ENCODE measurements at regions of chr2 and their contacts with region 1.

Region 1: GRCh38 chr2:207769597-207770486 is at the start of gene FZD5:
- DNase-seq: peak; percentile 91
- H3K4me3 ChIP-seq: peak within 1 kb of the TSS; percentile 67 to 76 (median 75)
- H3K27ac ChIP-seq: peak within 1 kb of the TSS; percentile 28
- H3K4me1 ChIP-seq: peaks cover 9% of the 10 kb centered on the region
- H3K27me3 ChIP-seq: no peaks in the 10 kb centered on the region
- CTCF ChIP-seq: peak; percentile 36 to 60
- total RNA-seq, gene FZD5: 4.4 to 8.7 TPM

Region 2: DNA sequence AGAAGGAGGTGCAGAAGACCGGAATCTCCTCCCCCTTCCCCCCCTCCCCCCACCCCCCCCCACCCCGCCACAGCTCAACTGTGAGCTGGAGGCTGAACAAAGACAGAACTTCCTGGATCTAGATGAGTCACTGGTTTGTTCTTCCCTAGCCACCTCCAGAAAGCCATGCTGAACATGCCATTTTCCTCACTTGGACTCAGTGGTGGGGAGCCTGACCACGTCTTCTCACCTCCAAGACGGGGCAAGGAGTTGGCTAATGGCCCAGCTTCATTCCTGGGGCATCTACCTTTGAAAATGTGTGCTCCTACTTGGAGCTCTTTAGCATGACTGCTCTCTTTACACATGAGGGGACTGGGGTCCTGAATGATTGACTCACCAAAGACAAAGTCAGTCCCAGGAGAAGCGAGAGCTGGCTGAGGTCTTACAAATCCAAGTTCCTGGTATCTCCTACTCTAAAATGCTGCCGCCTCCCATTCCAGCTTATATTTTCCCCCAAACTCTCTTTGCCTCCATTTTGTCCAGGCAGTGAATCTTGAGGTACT is 22.5 kb after region 1 on chr2:
- CTCF ChIA-PET with region 1: no interaction called
- dilution Hi-C with region 1: no loop called
- in situ Hi-C with region 1: no loop called
- intact Hi-C with region 1: loop called (anchors 1 kb)
- DNase-seq: peak; percentile 61
- H3K4me3 ChIP-seq: no peak overlapping the region
- H3K27ac ChIP-seq: peak overlapping the region; percentile 53
- H3K4me1 ChIP-seq: peaks cover 19% of the 10 kb centered on the region
- H3K27me3 ChIP-seq: no peaks in the 10 kb centered on the region
- CTCF ChIP-seq: no peak

Region 3: DNA sequence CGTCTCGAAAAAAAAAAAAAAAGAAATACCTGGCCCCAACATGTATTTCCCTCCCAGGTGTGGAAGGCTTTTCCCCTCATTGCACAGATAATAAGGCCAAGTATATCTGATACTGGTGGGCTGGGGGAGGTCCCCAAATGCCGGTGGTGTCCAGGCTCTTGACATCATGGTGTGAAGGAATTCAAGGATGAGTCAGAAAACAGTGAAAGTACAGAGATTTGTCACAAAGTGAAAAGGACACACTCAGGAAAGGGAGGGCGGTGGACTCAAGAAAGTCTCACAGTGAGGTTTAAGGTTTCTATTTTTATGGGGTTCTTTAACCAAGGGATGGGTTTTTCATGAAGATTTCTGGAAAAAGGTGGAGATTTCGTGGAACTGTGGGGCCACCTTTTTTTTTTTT is 37.7 kb after region 1 on chr2:
- CTCF ChIA-PET with region 1: no interaction called
- dilution Hi-C with region 1: no loop called
- in situ Hi-C with region 1: no loop called
- intact Hi-C with region 1: no loop called
- DNase-seq: no peak
- H3K4me3 ChIP-seq: no peak overlapping the region
- H3K27ac ChIP-seq: no peak overlapping the region
- H3K4me1 ChIP-seq: peaks cover 30% of the 10 kb centered on the region
- H3K27me3 ChIP-seq: no peaks in the 10 kb centered on the region
- CTCF ChIP-seq: no peak

Region 4: GRCh38 chr2:207974216-207974605 is 204.4 kb after region 1 on chr2:
- CTCF ChIA-PET with region 1: no interaction called
- dilution Hi-C with region 1: no loop called
- in situ Hi-C with region 1: loop called in 1 of 2 experiments (anchors 25 kb)
- intact Hi-C with region 1: loop called (anchors 1 kb)
- DNase-seq: peak; percentile 16
- H3K4me3 ChIP-seq: no peak overlapping the region
- H3K27ac ChIP-seq: no peak overlapping the region
- H3K4me1 ChIP-seq: no peaks in the 10 kb centered on the region
- H3K27me3 ChIP-seq: no peaks in the 10 kb centered on the region
- CTCF ChIP-seq: no peak

Region 5: DNA sequence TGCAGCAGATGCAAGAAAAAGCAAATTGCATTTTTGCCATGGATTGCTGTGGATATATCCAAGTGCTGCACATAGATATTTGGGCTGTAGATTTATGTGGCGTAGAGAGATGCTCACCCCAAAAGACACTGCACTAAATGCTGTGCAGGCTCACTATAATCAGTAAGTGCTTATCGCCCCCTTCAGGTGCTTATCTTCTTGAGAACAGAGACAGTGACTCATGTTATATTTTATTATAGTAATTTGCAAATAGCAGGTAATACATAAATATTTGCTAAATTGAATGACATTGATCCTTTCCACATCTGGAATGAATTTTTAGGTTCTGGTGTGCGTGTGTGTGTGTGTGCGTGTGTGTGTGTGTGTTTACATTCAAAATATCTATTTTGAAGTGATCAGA is 292.3 kb after region 1 on chr2:
- CTCF ChIA-PET with region 1: no interaction called
- dilution Hi-C with region 1: loop called (anchors 25 kb)
- in situ Hi-C with region 1: no loop called
- intact Hi-C with region 1: loop called (anchors 2 kb)
- DNase-seq: peak; percentile 33
- H3K4me3 ChIP-seq: no peak overlapping the region
- H3K27ac ChIP-seq: no peak overlapping the region
- H3K4me1 ChIP-seq: peaks cover 10% of the 10 kb centered on the region
- H3K27me3 ChIP-seq: no peaks in the 10 kb centered on the region
- CTCF ChIP-seq: peak; percentile 55 to 56

Region 6: GRCh38 chr2:208265801-208266552 is 496.1 kb after region 1 on chr2 and contains the start of gene PIKFYVE:
- CTCF ChIA-PET with region 1: no interaction called
- dilution Hi-C with region 1: no loop called
- in situ Hi-C with region 1: no loop called
- intact Hi-C with region 1: loop called (anchors 2 kb)
- DNase-seq: peak; percentile 98
- H3K4me3 ChIP-seq: peak within 1 kb of the TSS; percentile 61 to 83 (median 83)
- H3K27ac ChIP-seq: peak within 1 kb of the TSS; percentile 71
- H3K4me1 ChIP-seq: peaks cover 16% of the 10 kb centered on the region
- H3K27me3 ChIP-seq: no peaks in the 10 kb centered on the region
- CTCF ChIP-seq: peak in 1 of 2 donors; percentile 1
- total RNA-seq, gene PIKFYVE: 31.9 to 44.2 TPM